ENCODE measurements at regions of chr2 and their contacts with region 1.

Region 1: GRCh38 chr2:71243634-71244304 is 16.9 kb upstream of the PAIP2B start:
- DNase-seq: peak; percentile 79 to 88
- ATAC-seq: peak; percentile 96 to 97
- H3K4me3 ChIP-seq: no peak overlapping the region
- H3K27ac ChIP-seq: peak overlapping the region; percentile 74 to 87 (median 79)
- H3K4me1 ChIP-seq: peaks cover 48 to 52% of the 10 kb centered on the region in 2 donors
- H3K27me3 ChIP-seq: no peaks in the 10 kb centered on the region
- CTCF ChIP-seq: no peak
- POLR2A ChIP-seq: no peak

Region 2: DNA sequence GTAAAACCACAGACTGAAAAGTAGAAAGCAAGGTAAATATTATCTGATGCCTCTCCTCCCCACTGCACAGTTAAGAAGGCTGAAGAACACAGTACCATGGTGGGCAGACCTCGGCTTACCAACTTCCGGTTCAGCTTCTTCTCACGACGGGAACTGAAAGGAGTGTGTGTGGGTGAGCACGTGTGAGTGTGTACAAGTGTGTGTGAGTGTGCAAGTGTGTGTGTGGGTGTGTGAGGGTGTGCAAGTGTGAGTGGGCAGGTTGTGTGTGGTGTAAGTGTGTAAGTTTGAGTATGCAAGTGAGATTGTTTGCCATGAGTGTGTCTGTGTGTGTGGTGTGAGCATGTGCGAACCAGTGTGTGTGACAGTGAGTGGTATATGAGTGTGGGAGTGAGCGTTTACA is 579.2 kb before region 1 on chr2:
- in situ Hi-C with region 1: no loop called
- intact Hi-C with region 1: no loop called
- DNase-seq: no peak
- ATAC-seq: no peak
- H3K4me3 ChIP-seq: no peak overlapping the region
- H3K27ac ChIP-seq: no peak overlapping the region
- H3K4me1 ChIP-seq: no peaks in the 10 kb centered on the region
- H3K27me3 ChIP-seq: no peaks in the 10 kb centered on the region
- CTCF ChIP-seq: no peak
- POLR2A ChIP-seq: no peak

Region 3: DNA sequence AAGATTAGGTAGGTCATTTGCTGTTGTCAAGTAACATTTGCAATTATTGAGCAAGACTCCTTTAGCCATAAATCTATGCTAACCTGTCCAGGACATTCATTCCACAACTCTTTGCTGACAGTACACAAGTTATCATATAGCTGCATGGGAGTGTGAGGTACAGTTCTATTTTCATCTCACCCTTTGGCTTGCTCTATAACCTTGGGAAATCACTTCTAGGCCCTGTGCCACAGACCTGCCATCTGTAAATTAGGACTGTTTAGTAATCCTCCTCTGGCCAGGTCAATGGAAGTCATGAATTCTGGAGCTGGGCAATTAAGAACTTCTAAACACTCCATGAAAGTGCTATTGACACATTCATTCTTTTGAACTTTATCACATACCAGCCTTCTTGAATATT is 17.8 kb after region 1 on chr2:
- in situ Hi-C with region 1: no loop called
- intact Hi-C with region 1: loop called (anchors 1 kb)
- DNase-seq: peak; percentile 83 to 89
- ATAC-seq: peak; percentile 100
- H3K4me3 ChIP-seq: no peak overlapping the region
- H3K27ac ChIP-seq: peak overlapping the region; percentile 51 to 80 (median 62)
- H3K4me1 ChIP-seq: peaks cover 7 to 9% of the 10 kb centered on the region in 2 donors
- H3K27me3 ChIP-seq: no peaks in the 10 kb centered on the region
- CTCF ChIP-seq: no peak
- POLR2A ChIP-seq: no peak

Region 4: GRCh38 chr2:71620851-71621251 is 377.1 kb after region 1 on chr2:
- in situ Hi-C with region 1: no loop called
- intact Hi-C with region 1: no loop called
- DNase-seq: no peak
- ATAC-seq: no peak
- H3K4me3 ChIP-seq: no peak overlapping the region
- H3K27ac ChIP-seq: no peak overlapping the region
- H3K4me1 ChIP-seq: peaks cover 7 to 18% of the 10 kb centered on the region in 2 donors
- H3K27me3 ChIP-seq: no peaks in the 10 kb centered on the region
- CTCF ChIP-seq: no peak
- POLR2A ChIP-seq: no peak